ENCODE measurements at regions of chr2 and their contacts with region 1.

Region 1: DNA sequence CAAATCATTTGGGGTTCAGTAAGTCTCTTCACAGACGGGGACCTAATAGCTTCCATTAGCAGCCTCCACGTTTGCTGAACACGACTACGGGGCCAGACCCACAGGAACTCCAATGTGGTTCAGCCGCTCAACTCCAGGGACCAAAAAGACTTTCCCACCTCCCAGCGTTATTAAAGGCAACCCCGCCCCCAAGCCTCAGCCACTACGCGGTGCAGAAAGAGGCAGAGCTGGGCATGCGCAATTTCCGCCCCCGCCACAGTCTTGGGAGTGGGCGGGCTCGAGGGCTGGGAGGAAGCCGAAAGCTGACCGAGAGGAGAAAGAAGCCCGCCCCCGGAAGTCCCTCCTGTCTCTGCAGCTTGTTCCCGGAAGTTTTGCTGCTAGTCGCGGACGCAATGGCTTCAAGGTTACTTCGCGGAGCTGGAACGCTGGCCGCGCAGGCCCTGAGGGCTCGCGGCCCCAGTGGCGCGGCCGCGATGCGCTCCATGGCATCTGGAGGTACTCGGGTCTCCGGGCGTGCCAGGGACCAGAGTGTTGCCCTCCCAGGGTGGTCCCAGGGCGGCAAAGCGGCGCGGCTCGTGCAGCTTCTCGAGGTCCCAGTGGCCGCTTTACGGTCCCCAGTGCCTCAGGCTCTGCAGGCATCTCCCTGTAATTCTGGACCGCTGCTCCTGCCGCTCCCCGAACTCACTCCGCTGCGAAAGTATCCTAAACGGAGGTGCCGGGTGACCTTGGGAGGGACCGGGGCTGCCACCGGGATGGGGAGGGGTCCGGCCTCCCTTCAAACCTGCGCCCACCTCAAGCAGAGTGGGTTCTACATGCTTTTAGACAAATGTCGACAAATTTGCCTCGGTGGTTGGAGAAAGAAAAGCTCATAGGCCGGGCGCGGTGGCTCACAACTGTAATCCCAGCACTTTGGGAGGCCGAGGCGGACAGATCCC is at the start of gene COX5B:
- DNase-seq: peak; percentile 99
- H3K4me3 ChIP-seq: peak within 1 kb of the TSS; percentile 91 to 96 (median 92)
- H3K27ac ChIP-seq: peak within 1 kb of the TSS; percentile 87 to 95 (median 93)
- H3K4me1 ChIP-seq: peaks cover 13 to 27% (median 18%) of the 10 kb centered on the region in 4 donors
- H3K27me3 ChIP-seq: no peaks in the 10 kb centered on the region
- CTCF ChIP-seq: no peak
- EP300 ChIP-seq: no peak
- POLR2A ChIP-seq: peak; percentile 46
- total RNA-seq, gene COX5B: 382 to 507 (median 481) TPM

Region 2: GRCh38 chr2:97663965-97664635 is 18.1 kb after region 1 on chr2 and contains the start of gene ACTR1B:
- intact Hi-C with region 1: loop called (anchors 2 kb)
- DNase-seq: peak; percentile 99
- H3K4me3 ChIP-seq: peak within 1 kb of the TSS; percentile 67 to 85 (median 76)
- H3K27ac ChIP-seq: peak within 1 kb of the TSS; percentile 88 to 98 (median 94)
- H3K4me1 ChIP-seq: peaks cover 31 to 37% (median 35%) of the 10 kb centered on the region in 4 donors
- H3K27me3 ChIP-seq: no peaks in the 10 kb centered on the region
- CTCF ChIP-seq: peak; percentile 44 to 74 (median 68)
- EP300 ChIP-seq: no peak
- POLR2A ChIP-seq: no peak
- total RNA-seq, gene ACTR1B: 74.3 to 89.2 (median 83.9) TPM

Region 3: DNA sequence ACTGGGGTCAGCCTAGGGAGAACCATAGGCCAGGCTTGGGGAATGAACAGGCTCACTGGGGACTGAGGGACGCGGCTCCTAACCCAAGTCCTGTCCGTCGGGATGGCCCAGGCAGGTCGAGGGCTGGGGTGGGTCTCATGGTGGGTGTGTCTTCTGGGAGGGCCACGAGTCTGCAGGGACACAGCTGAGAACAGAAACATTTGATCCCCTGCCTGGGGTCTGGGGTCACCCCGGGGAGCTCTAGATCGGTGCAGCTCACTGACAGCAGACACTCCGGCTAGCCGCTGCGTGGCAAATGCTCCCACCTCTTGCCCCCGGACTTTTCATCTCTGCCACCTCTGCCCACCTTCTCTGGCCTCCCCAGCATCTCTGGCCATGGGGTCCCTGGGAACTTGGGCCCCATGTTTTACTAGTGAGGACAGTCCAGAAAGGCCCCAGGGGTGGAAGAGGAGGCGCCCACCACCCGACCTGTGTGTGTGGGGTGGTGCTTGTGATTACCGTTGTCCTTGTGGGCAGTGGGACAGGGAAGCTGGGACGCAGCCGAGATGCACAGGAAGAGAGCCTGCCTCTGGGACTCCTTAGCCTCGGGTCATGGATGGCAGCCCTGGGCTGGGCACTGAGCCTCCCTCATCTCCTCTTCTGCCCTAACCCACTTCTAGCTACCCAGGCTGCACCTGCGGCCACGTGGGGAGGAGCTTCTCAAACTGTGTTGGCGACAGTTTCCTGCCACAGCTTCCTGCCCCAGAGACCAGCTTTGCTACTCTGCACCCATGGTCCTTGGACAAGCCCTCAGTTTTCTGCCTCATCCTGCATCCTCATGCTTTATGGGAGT is 72.3 kb after region 1 on chr2:
- intact Hi-C with region 1: no loop called
- DNase-seq: no peak
- H3K4me3 ChIP-seq: no peak overlapping the region
- H3K27ac ChIP-seq: no peak overlapping the region
- H3K4me1 ChIP-seq: no peaks in the 10 kb centered on the region
- H3K27me3 ChIP-seq: no peaks in the 10 kb centered on the region
- CTCF ChIP-seq: no peak
- EP300 ChIP-seq: no peak
- POLR2A ChIP-seq: no peak